ENCODE measurements at regions of chr1 and their contacts with region 1.

Region 1: DNA sequence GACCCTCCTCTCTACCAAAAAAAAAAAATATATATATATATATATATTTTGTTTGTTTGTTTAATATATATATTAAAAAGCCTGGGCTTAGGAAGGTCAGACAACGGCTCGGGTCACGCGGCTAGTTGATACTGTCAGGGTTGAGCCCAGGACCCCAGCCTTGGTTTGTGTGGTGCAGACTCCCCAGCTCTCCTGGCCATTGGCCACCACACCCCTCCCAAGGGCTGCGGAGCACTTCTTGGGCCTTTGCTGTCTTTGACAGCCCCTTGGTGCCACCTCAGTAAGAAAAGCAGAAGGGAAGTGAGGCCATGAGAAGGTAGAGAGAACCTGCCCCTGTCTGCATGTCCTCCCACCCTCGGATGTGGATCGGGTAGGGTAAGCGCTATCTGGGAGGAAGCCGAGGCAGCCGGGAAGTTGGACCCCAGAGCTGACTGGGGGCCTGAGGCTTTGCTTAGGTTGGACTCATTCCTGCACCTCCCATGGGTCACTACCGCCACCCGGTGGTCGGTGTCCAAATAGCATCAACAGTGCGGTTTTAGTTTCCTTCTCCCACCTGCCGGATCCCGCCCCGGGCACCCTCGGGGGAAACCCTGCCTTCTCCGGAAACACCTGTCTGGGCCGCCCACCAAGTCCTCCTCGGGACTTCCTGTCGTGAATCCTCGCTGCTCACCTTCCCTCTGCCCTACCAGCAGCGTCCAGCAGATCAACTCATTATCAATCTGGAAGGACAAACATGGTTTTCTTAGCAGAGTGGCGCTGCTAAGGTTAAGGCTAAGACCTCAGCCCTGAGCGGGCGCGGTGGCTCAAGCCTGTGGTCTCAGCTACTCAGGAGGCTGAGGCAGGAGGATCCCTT is 29.8 kb upstream of the GNPAT start:
- DNase-seq: peak; percentile 59
- H3K4me3 ChIP-seq: peak overlapping the region; percentile 61
- H3K27ac ChIP-seq: no peak overlapping the region
- H3K4me1 ChIP-seq: no peaks in the 10 kb centered on the region
- H3K27me3 ChIP-seq: peaks cover 21% of the 10 kb centered on the region

Region 2: GRCh38 chr1:230940848-230941247 is 270.4 kb before region 1 on chr1:
- in situ Hi-C with region 1: loop called (anchors 25 kb)
- DNase-seq: peak; percentile 56
- H3K4me3 ChIP-seq: no peak overlapping the region
- H3K27ac ChIP-seq: no peak overlapping the region
- H3K4me1 ChIP-seq: peaks cover 5% of the 10 kb centered on the region; the same call in 1 of the 2 replicates
- H3K27me3 ChIP-seq: no peaks in the 10 kb centered on the region

Measured in GM23248 (cell line).